Lower leg skin (tissue), 4 donors: ENCODE measurements at regions of chr3 and their contacts with region 1.

Region 1: DNA sequence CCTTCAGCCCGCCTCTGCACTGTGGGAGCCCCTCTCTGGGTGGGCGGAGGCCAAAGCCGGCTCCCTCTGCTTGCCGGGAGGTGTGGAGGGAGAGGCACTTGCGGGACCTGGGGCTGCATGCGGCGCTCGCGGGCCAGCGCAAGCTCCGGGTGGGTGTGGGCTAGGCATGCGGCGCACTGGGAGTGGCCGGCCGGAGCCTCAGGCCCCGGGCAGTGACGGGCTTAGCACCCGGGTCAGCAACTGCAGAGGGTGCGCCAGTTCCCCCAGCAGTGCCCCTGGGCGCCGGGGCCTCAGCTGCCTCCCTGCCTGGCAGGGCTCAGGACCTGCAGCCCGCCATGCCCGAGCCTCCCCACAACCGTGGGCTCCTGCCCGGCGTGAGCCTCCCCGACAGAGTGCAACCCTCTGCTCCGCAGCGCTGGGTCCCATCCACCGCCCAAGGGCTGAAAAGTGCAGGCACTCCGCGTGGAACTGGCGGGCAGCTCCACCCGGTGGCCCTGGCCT is 98.9 kb upstream of the POU1F1 start:
- DNase-seq: peak in 1 of 2 donors; percentile 80
- H3K4me3 ChIP-seq: no peak overlapping the region
- CTCF ChIP-seq: no peak
- POLR2A ChIP-seq: no peak

Region 2: DNA sequence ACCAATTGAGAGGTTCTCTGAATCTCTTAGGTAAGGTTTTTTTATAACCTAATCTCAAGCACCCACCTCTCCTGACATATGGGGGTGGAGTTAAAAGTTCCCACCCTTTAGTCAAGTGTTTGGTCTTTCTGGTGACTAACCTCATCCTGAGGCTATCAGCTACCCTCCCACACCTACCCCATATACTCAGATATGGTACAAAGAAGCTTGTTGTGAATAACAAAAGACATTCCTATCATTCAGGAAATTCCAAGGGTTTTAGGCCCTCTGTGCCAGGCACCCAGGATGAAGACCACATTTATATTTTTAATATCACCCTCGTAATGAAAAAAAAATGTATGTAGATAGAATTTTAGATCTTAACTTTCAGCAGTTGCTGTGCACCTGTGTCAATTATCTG is 139.2 kb before region 1 on chr3:
- intact Hi-C with region 1: no loop called
- DNase-seq: no peak
- H3K4me3 ChIP-seq: no peak overlapping the region
- CTCF ChIP-seq: no peak
- POLR2A ChIP-seq: no peak

Region 3: GRCh38 chr3:87318617-87319021 is 56.7 kb before region 1 on chr3:
- intact Hi-C with region 1: no loop called
- DNase-seq: no peak
- H3K4me3 ChIP-seq: no peak overlapping the region
- CTCF ChIP-seq: no peak
- POLR2A ChIP-seq: no peak

Region 4: GRCh38 chr3:87437765-87438164 is 62.5 kb after region 1 on chr3:
- intact Hi-C with region 1: loop called (anchors 2 kb)
- DNase-seq: no peak
- H3K4me3 ChIP-seq: no peak overlapping the region
- CTCF ChIP-seq: no peak
- POLR2A ChIP-seq: no peak